ENCODE measurements at regions of chr6 and their contacts with region 1.

Region 1: GRCh38 chr6:143026696-143027449 is 33.8 kb upstream of the AIG1 start:
- DNase-seq: peak; percentile 7
- ATAC-seq: peak; percentile 83
- H3K4me3 ChIP-seq: no peak overlapping the region
- H3K27ac ChIP-seq: no peak overlapping the region
- H3K4me1 ChIP-seq: no peaks in the 10 kb centered on the region
- H3K27me3 ChIP-seq: no peaks in the 10 kb centered on the region
- CTCF ChIP-seq: peak; percentile 60 to 70 (median 67); a peak in 5 of 6 replicates
- POLR2A ChIP-seq: no peak
- RAD21 ChIP-seq: peak; percentile 77

Region 2: DNA sequence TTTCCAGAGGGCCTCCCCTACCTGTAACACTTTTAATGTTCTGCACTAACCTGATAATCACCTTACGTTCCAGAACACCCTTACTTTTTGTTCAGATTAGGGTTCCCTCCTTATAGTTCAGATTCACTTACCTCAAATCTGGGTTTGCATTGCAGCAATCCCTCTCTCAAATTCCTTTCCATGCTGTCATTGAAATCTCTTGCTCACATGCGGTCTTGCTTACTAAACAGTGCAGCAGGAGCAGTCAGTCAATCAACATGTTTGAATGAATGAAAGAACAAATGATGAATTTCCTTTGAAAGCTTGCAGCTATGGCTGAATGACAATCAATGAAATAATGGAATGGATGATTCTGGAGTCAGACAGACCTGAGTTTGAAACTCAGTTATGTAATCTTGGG is 282.0 kb before region 1 on chr6:
- CTCF ChIA-PET with region 1: interaction called, 5 read pairs
- POLR2A ChIA-PET with region 1: no interaction called
- RAD21 ChIA-PET with region 1: no interaction called
- intact Hi-C with region 1: loop called (anchors 2 kb)
- DNase-seq: no peak
- ATAC-seq: no peak
- H3K4me3 ChIP-seq: no peak overlapping the region
- H3K27ac ChIP-seq: no peak overlapping the region
- H3K4me1 ChIP-seq: no peaks in the 10 kb centered on the region
- H3K27me3 ChIP-seq: no peaks in the 10 kb centered on the region
- CTCF ChIP-seq: no peak
- POLR2A ChIP-seq: no peak
- RAD21 ChIP-seq: no peak

Region 3: GRCh38 chr6:143050509-143050908 is 23.6 kb after region 1 on chr6:
- CTCF ChIA-PET with region 1: no interaction called
- POLR2A ChIA-PET with region 1: no interaction called
- RAD21 ChIA-PET with region 1: no interaction called
- intact Hi-C with region 1: no loop called
- DNase-seq: no peak
- ATAC-seq: no peak
- H3K4me3 ChIP-seq: no peak overlapping the region
- H3K27ac ChIP-seq: no peak overlapping the region
- H3K4me1 ChIP-seq: no peaks in the 10 kb centered on the region
- H3K27me3 ChIP-seq: no peaks in the 10 kb centered on the region
- CTCF ChIP-seq: no peak
- POLR2A ChIP-seq: no peak
- RAD21 ChIP-seq: no peak

Region 4: GRCh38 chr6:143061597-143062385 is 34.9 kb after region 1 on chr6:
- CTCF ChIA-PET with region 1: no interaction called
- POLR2A ChIA-PET with region 1: no interaction called
- RAD21 ChIA-PET with region 1: no interaction called
- intact Hi-C with region 1: no loop called
- DNase-seq: no peak
- ATAC-seq: no peak
- H3K4me3 ChIP-seq: peak overlapping the region; percentile 73 to 74
- H3K27ac ChIP-seq: no peak overlapping the region
- H3K4me1 ChIP-seq: peaks cover 8 to 38% of the 10 kb centered on the region in 2 experiments; a peak in 3 of 4 replicates
- H3K27me3 ChIP-seq: no peaks in the 10 kb centered on the region
- CTCF ChIP-seq: no peak
- POLR2A ChIP-seq: no peak
- RAD21 ChIP-seq: no peak